ENCODE measurements at regions of chr10 and their contacts with region 1.

Region 1: GRCh38 chr10:124791378-124792348 is at the start of gene EEF1AKMT2:
- DNase-seq: peak; percentile 92
- total RNA-seq, gene EEF1AKMT2: 14.6 TPM

Region 2: GRCh38 chr10:124802313-124802675 is 10.6 kb after region 1 on chr10:
- intact Hi-C with region 1: loop called (anchors 1 kb)
- DNase-seq: no peak

Region 3: DNA sequence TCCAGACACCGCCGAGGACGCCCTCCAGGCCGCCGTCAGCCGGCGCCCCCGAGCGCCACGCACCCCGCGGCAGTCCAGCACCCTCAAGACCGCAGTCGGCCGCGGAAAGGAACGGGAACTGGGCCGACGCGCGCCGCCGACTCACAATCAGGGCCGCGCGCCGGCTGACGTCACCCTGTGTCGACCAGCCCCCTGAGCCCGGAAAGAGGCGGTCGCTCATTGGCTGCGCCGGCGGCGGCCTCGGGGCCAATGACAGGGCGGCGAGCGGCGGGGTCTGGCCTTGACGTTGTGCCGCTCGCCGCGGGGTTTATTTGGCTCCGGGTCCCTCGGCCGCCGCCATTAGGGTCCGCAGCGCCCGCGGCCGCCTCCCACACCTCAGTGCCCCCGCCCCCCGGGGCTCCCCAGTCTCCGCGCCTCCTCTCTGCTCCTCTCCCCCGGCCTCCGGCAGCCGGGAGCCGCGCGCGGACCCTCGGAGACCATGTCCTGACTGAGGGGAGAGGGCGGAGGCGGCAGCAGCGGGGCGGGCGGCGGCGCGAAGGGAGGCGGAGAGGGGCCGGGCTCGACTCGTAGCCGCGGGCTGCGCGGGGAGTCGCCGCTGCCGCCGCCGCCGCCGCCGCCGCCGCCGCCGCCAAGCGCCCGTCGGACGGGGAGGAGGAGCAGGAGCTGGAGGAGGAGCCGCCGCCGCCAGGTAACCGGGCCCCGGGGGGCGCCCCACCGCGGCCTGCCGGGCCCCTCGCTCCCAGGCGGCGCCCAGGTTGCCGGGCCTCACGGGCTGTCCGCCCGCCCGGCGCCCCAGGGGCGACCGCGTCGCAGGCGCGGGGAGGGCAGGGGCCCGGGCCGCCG is 125.1 kb after region 1 on chr10:
- intact Hi-C with region 1: loop called (anchors 5 kb)
- DNase-seq: peak; percentile 99

Region 4: GRCh38 chr10:124983255-124983705 is 191.6 kb after region 1 on chr10:
- intact Hi-C with region 1: loop called (anchors 10 kb)
- DNase-seq: no peak

Measured in cardiac septum (tissue), 1 donor.